ENCODE measurements at regions of chr3 and their contacts with region 1.

Region 1: DNA sequence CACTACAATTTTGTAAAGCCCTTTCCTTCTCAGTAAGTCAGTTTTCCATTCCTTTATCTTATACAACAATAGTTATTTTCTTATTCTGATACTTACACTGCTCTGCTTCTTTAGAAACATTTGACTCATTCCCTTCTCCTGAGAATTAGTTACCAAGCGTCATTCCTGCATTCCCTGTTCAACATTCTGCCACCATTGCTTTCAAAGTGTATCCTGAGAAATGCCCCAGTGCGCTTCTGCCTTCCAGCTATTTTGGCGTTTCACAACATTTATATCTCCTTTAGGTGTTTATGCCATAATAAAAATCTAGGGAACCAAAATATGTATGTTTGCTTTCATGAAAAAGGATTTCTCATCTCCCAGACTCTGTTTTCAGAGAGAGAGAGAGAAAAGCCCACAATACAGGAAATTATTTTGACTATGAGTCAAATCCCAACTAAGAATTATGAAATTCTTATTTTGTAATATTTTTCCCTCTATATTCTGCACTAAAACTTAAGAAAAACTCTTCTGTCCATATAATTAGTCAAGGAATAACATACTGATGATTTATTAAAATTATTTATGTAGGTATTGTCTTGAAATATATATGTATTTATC is 118.2 kb upstream of the RAP2B start:
- DNase-seq: no peak
- ATAC-seq: no peak

Region 2: GRCh38 chr3:152885076-152885475 is 158.8 kb before region 1 on chr3:
- intact Hi-C with region 1: no loop called
- DNase-seq: no peak
- ATAC-seq: no peak

Region 3: DNA sequence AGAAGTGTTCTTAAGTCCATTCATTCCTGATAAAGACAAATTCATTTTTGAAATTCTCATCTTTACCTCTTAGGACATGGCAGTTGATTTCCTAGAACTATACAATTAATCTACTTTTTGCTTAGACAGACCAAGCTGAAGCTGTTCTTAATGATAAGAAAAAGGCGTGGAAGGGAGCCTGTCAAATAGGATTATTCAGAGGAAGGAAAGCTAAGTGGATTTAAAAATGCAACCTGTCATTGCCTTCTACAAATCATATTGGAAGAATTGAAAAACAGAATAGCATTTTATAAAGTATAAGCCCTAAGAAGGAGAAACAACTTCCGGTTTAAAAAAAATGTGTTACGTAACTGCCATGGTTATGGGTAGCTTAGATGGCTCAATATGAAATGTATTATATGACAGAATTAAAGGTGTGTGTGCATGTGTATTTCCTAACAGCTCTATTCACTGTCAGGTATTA is 37.0 kb after region 1 on chr3:
- intact Hi-C with region 1: no loop called
- DNase-seq: no peak
- ATAC-seq: no peak

Region 4: GRCh38 chr3:153161138-153161713 is 117.4 kb after region 1 on chr3:
- intact Hi-C with region 1: loop called (anchors 10 kb)
- DNase-seq: peak; percentile 94
- ATAC-seq: peak; percentile 95

Region 5: DNA sequence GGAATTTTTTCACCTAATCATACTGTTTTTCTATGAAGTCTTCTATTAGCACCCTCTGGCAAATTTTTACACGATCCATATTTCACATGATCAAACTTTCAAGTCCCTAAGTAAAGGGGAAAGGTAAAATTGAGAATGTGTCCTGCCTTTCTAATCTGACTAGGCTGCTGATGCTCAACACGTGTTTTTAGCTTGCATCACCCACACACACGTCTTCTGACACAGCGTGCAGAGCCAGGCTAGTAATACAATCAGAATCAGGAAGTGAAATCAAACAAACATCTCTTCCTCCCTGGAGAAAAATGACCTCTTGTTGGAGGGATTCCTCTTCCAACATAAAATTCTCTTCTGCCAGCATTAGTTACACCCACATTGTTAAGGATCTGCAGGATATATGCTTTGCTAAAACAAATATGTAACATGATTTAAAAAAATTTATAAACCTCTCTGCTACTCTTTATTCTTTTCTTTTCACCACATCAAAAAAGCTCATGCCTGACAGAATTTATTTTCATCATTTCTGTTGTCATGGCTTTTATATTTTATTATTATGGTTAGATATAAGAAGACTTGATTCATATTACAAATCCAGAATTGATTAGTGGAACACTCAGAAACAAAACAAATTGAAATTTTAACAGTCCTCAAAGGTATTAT is 240.6 kb after region 1 on chr3:
- intact Hi-C with region 1: loop called (anchors 10 kb)
- DNase-seq: no peak
- ATAC-seq: peak; percentile 78

Region 6: DNA sequence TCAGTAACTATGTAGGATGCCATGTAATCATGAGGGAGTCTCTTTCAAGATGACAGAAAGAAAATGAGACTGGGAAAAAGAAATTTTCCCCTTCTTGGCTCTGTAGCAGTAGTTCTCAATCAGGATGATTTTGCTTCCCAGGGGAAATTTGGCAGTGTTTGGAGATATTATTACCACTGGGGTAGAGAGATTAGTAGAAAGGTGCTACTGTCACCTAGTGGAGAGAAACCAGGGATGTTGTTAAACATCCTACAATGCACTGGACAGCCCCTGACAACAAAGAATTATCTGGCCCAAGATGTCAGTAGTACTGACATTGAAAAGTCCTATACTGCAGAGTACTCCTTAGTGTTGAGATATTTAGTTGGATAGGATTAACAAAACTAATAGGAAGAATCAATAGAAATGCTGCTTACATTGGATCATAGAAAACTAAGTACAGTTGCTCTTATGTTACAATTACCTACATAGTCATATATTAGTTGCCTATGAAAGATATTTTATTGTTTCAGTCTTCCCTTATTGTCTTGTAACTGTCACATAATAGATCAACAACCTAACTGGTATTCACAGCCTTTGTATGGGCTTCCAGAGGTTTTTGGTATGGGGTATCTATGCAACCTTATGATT is 551.5 kb after region 1 on chr3:
- intact Hi-C with region 1: loop called (anchors 2 kb)
- DNase-seq: no peak
- ATAC-seq: no peak

Region 7: DNA sequence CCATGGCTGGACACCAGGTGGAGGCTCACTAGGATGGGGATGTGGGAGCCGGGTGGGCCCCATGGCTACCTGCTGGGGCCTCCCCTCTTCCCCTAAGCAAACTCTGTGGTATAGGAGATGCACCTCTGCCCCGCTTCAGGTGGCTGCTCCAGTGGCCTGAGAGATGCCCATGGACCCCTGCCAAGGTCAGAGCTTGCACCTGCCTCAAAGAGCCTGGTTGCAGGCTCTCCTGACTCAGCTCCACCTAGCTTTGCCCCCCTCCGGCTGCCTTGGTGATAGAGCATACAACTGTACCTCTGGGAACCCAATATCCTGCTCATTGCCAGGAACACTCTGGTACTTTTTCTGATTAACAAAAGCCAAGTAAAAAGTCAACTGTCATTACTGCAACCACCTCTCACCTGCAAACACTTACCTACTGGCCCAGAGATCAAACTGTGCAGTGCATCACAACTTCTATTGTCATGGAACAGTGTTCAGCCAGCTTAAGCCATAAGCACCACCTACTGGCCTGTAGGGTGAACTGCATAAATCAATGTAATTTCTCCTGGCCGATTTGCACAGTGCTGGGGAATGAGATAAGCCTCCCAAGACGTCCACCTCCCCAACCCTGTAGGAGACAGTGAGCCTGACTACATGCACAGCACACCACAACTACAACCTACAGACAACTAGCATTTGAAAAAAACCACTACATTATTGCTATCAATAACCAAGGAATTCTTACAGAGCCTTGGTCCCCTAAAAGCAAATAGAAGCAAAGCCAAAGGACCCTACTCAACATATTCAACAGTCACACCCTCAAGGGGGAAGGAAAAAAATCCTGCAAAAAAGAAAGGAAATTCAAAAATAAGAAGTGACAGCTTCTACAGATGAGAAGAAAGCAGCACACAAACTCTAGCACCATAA is 725.0 kb after region 1 on chr3:
- intact Hi-C with region 1: loop called (anchors 5 kb)
- DNase-seq: peak; percentile 65
- ATAC-seq: peak; percentile 65

Region 8: DNA sequence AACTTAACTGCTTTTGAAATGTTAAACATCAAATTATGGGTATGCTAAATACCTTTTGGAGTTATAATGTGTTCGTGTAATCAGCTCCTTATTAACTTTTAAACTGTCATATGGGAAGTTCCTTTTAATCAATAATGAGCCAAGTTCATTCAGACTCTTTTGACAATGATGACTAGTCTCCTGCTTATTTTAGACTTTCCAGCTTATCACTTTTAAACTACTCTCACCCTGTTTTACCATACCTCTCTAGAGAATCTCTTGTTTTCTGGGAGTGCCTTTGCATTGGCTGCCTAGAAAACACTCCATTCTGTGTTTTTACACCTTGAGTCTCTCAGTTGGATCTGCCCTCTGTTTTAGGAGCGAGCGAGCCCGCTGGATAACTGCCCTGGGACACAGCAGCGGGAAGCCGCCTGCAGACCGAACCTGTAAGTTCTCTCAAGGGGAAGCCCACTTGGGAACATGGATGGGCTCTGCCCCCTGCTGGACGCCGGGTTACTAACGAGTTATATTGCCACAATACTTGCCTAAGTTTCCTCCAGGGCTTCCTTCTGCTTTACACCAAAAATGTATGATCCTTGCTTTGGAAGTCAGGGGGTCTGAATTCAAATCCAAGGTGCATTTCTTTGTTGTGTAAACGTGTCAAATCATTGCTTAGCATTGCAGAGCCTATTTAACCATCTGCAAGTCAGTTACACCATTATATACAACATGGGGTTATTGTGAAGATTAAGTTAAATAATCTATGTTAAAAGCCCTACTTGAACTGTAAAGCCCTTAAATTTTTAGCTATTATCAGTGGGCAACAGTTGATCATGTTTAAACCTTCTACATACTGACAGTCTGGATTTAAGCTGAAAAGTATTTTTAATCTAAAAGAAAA is 1209.2 kb after region 1 on chr3:
- intact Hi-C with region 1: loop called (anchors 5 kb)
- DNase-seq: peak; percentile 91
- ATAC-seq: peak; percentile 85

Measured in Right ventricle myocardium inferior (tissue), 1 donor.